ENCODE measurements at regions of chr15 and their contacts with region 1.

Region 1: GRCh38 chr15:75367913-75368688 is at the start of gene MAN2C1:
- DNase-seq: peak; percentile 94 to 97 (median 97)
- ATAC-seq: peak; percentile 95 to 98 (median 96)
- H3K4me3 ChIP-seq: peak within 1 kb of the TSS; percentile 63 to 100 (median 86)
- H3K27ac ChIP-seq: peak within 1 kb of the TSS; percentile 92 to 100 (median 98)
- H3K4me1 ChIP-seq: peaks cover 0 to 23% (median 16%) of the 10 kb centered on the region in 12 donors
- H3K27me3 ChIP-seq: no peaks in the 10 kb centered on the region
- CTCF ChIP-seq: peak; percentile 52 to 93 (median 70)
- POLR2A ChIP-seq: peak in 1 of 2 donors; percentile 77
- total RNA-seq, gene MAN2C1: 68.0 to 130 (median 111) TPM

Region 2: DNA sequence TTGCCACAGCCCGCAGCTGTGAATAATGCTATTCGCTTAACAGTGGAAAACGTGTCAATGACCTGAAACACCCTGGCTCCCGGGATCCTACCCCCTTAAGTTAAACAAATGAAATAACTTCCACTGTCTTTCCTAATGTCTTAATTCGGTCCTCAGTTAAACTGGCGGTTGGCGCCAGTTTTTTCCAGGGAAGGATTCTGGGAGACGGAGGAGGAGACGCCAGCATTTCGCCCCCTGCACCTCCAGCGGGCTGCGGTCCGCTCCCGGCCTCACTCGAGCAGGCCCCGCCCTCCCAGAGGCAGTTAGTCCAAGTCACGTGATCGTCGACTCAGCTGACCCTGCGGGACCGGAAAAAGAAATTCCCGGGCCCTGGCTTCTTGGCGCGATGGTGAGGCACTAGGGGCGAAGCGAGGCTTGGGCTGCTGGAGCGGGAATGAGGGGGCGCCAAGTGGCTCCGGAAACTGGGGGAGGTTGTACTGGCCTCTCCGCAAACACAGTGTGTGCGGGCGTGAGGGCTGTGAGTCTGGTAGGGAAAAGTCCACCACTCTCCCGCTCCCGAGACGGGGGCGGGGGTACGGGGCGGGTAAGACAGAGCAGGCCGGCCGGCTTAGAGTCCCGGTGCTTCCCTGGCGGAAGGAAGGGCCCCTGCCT is 32.3 kb before region 1 on chr15 and contains the start of gene COMMD4:
- intact Hi-C with region 1: loop called in 1 of 10 experiments (anchors 2 kb)
- DNase-seq: peak; percentile 96 to 98 (median 96)
- ATAC-seq: peak; percentile 89 to 96 (median 94)
- H3K4me3 ChIP-seq: peak within 1 kb of the TSS; percentile 27 to 90 (median 71)
- H3K27ac ChIP-seq: peak within 1 kb of the TSS in 11 of 12 donors; percentile 14 to 77 (median 68)
- H3K4me1 ChIP-seq: peaks cover 0 to 16% (median 13%) of the 10 kb centered on the region in 12 donors
- H3K27me3 ChIP-seq: no peaks in the 10 kb centered on the region
- CTCF ChIP-seq: peak in 1 of 12 donors; percentile 7
- POLR2A ChIP-seq: peak in 1 of 2 donors; percentile 47
- total RNA-seq, gene COMMD4: 23.9 to 66.9 (median 35.7) TPM

Region 3: DNA sequence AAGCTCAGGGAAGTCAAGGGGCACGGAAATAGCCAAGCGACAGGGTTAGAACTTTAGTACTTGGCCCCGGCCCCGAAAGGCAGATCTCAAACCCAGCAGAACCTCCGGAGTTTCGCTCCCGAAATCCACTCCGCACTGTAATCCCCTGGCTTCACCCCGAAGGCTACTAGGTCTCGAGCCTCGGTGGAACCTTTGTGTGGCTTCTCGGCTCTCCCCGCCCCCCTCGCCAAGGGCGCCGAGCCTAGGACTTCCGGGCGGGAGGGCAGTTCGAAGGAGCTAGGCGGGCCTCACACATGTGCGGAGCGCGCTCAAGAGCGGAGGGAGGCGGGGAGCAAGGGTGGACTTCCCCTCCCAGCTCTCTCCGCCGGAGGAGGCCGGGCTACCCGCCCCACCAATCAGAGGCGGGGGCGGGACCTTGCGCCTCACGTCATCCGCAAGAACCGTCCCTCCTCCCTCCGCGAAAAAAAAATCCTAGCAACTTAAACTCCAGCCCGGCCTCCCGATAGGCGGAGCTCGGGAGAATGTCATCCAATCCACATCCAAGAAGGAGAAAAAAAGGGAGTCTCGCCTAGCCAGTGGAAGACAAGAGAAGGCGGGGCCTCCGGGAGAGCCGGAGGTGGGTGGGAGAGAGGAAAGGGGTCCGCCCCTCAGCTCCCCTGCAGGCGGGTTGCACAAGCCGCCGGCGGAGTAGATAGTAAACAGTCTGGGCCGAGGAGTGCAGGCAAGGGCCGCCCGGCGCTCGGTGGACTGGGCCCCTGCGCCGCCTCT is 85.8 kb after region 1 on chr15:
- intact Hi-C with region 1: loop called in 7 of 10 experiments (anchors 1 to 5 kb)
- DNase-seq: peak; percentile 98 to 99 (median 98)
- ATAC-seq: peak; percentile 65 to 76 (median 70)
- H3K4me3 ChIP-seq: peak overlapping the region; percentile 84 to 98 (median 95)
- H3K27ac ChIP-seq: peak overlapping the region; percentile 94 to 100 (median 98)
- H3K4me1 ChIP-seq: peaks cover 4 to 37% (median 26%) of the 10 kb centered on the region in 12 donors
- H3K27me3 ChIP-seq: no peaks in the 10 kb centered on the region
- CTCF ChIP-seq: peak in 4 of 12 donors; percentile 10 to 39 (median 20)
- POLR2A ChIP-seq: peak in 1 of 2 donors; percentile 52

Region 4: DNA sequence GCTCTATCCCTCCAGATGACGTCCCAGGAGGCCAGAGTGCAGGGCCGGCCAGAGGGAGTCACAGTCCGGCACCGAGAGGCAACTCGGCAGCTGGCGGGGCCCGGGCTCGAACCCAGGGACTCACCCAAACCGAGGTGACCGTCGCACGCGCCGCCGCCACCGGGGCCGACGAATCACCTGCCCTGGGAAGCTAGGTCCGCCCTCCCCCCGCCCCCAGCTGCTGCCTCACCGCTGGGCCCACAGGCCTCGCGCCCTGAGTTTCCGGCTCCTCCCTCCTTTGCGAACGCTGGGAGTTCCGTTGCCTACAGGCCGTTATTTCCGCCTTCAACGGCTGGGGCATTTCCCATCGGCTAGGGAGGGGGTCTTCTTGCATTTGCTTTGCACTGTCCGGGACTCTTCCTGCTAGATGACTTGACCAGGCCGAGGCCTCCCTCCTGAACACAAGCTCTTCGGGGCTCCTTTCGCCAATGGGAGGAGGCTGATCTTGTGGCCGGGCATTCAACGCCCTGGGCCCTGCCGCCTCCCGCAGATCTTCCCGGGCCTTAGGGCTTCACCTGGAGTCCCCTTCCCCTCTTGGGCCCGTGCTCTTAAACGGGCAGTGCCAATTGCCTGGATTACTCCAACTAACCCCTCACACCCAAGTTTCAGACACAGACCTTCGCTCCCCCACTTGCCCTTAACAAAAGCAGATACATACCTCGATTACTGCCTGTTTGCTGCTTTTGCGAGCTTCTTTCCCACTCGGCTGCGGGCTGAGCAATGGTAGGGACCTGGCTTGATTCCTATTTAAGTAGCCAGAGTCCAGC is 257.6 kb after region 1 on chr15 and contains the start of gene SNUPN:
- intact Hi-C with region 1: loop called in 3 of 10 experiments (anchors 1 to 5 kb)
- DNase-seq: peak; percentile 96 to 97 (median 96)
- ATAC-seq: peak; percentile 85 to 95 (median 94)
- H3K4me3 ChIP-seq: peak within 1 kb of the TSS; percentile 67 to 98 (median 81)
- H3K27ac ChIP-seq: peak within 1 kb of the TSS; percentile 93 to 100 (median 97)
- H3K4me1 ChIP-seq: peaks cover 0 to 25% (median 13%) of the 10 kb centered on the region in 12 donors
- H3K27me3 ChIP-seq: no peaks in the 10 kb centered on the region
- CTCF ChIP-seq: no peak
- POLR2A ChIP-seq: peak in 1 of 2 donors; percentile 57
- total RNA-seq, gene SNUPN: 13.2 to 21.6 (median 14.5) TPM

Region 5: GRCh38 chr15:75639709-75640482 is 271.8 kb after region 1 on chr15 and contains the start of gene IMP3:
- intact Hi-C with region 1: loop called in 1 of 10 experiments (anchors 10 kb)
- DNase-seq: peak; percentile 95 to 97 (median 95)
- ATAC-seq: peak; percentile 98 to 99 (median 98)
- H3K4me3 ChIP-seq: peak within 1 kb of the TSS; percentile 71 to 99 (median 86)
- H3K27ac ChIP-seq: peak within 1 kb of the TSS; percentile 86 to 99 (median 94)
- H3K4me1 ChIP-seq: peaks cover 9 to 44% (median 30%) of the 10 kb centered on the region in 12 donors
- H3K27me3 ChIP-seq: no peaks in the 10 kb centered on the region
- CTCF ChIP-seq: peak in 1 of 12 donors; percentile 23
- POLR2A ChIP-seq: peak; percentile 82 to 97
- total RNA-seq, gene IMP3: 37.1 to 151 (median 44.5) TPM

Region 6: GRCh38 chr15:75672646-75673425 is 304.7 kb after region 1 on chr15:
- intact Hi-C with region 1: loop called in 1 of 10 experiments (anchors 10 kb)
- DNase-seq: no peak
- ATAC-seq: peak; percentile 24 to 36 (median 30)
- H3K4me3 ChIP-seq: peak overlapping the region in 2 of 12 donors; percentile 1 to 6
- H3K27ac ChIP-seq: peak overlapping the region; percentile 51 to 89 (median 64)
- H3K4me1 ChIP-seq: peaks cover 15 to 65% (median 28%) of the 10 kb centered on the region in 12 donors
- H3K27me3 ChIP-seq: no peaks in the 10 kb centered on the region
- CTCF ChIP-seq: no peak
- POLR2A ChIP-seq: no peak

Region 7: DNA sequence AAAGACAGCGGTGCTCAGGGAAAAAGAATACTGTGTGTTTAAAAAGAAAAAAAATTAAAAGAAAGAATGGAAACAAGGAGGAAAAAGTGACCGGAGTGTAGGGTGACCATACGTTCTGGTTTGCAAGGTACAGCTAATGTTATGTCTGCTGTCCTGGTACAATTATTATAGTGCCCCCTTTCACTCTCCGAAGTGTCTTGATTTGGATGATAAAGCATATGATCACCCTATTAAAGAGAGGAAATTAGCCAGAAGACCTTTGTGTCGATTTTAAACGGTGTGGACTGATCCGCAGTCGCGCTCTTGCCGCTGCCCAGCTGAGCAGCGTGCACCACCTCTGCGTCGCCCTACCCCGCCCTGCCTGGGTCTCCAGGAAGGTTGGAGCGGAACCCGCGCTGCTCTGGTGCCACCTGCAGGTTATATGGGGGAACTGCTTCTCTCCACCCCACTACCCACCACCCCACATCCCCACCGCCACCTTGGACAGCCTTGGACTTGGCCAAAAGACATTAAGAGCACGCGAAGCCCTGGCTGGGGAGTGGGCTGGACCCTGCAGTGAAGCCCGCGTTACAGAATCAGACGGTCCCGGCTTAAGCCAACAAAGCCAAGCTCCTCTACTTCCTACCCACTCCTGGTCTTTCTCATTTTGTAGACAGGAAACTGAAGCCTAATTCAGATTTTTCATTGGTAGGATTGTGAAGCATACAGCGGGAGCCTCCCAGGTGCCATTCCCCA is 433.9 kb after region 1 on chr15:
- intact Hi-C with region 1: loop called in 2 of 10 experiments (anchors 5 kb)
- DNase-seq: peak; percentile 78 to 92 (median 84)
- ATAC-seq: peak; percentile 93 to 99 (median 98)
- H3K4me3 ChIP-seq: peak overlapping the region in 8 of 12 donors; percentile 11 to 40 (median 29)
- H3K27ac ChIP-seq: no peak overlapping the region
- H3K4me1 ChIP-seq: peaks cover 0 to 16% (median 4%) of the 10 kb centered on the region in 12 donors
- H3K27me3 ChIP-seq: peaks cover 0 to 27% (median 0%) of the 10 kb centered on the region in 9 donors
- CTCF ChIP-seq: peak; percentile 79 to 98 (median 92)
- POLR2A ChIP-seq: no peak

Measured in heart left ventricle (tissue), 16 donors.